Right ventricle myocardium superior (tissue), 1 donor: ENCODE measurements at regions of chr1 and their contacts with region 1.

Region 1: GRCh38 chr1:153572569-153573015 is 6.9 kb upstream of the S100A2 start:
- DNase-seq: peak; percentile 88
- ATAC-seq: peak; percentile 89

Region 2: GRCh38 chr1:153532769-153533599 is 39.6 kb before region 1 on chr1:
- intact Hi-C with region 1: loop called (anchors 2 kb)
- DNase-seq: peak; percentile 92
- ATAC-seq: peak; percentile 56

Region 3: GRCh38 chr1:153663211-153663610 is 90.6 kb after region 1 on chr1:
- intact Hi-C with region 1: loop called (anchors 10 kb)
- DNase-seq: no peak
- ATAC-seq: no peak

Region 4: DNA sequence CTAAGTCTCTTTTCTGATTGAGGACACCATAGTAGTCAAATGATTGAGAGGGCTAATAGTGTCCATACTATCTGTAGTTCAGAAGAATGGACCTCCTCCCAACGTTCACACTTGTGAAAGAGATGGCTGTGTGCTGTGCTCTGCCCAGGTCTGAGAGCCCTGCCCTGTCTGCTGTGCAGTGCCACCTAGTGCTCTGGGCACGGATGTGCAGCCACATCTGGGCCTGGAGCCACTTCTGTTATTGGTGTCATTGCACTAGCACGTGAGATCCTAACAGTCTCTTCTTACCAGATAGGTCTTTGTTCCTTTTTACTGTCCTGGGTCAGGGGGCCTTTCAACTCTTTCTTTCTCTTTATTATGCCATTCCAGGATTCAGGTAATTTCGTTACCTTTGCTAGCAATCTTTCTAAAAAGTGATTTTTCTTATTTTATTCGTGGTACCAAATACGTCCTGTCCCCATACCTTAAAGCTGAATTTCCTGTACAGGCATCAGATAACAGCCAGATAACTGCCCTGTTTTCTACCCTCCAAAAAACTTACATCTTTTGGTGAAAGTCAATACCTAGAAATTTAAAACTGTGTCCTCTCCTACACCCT is 176.9 kb after region 1 on chr1:
- intact Hi-C with region 1: no loop called
- DNase-seq: peak; percentile 91
- ATAC-seq: peak; percentile 95